MCF 10A (cell line): ENCODE measurements at regions of chr11 and their contacts with region 1.

Region 1: GRCh38 chr11:59753650-59754493 is 1.3 kb upstream of the STX3 start:
- DNase-seq: peak; percentile 83
- H3K4me3 Mint-ChIP-seq: peak overlapping the region; percentile 92
- H3K27ac Mint-ChIP-seq: peak overlapping the region; percentile 51
- H3K4me1 Mint-ChIP-seq: peaks cover 13% of the 10 kb centered on the region
- H3K27me3 Mint-ChIP-seq: no peaks in the 10 kb centered on the region
- CTCF ChIP-seq: peak; percentile 82

Region 2: GRCh38 chr11:59550368-59550841 is 203.5 kb before region 1 on chr11:
- CTCF ChIA-PET with region 1: no interaction called
- POLR2A ChIA-PET with region 1: no interaction called
- intact Hi-C with region 1: loop called (anchors 2 kb)
- DNase-seq: peak; percentile 93
- H3K4me3 Mint-ChIP-seq: peak overlapping the region; percentile 92
- H3K27ac Mint-ChIP-seq: peak overlapping the region; percentile 98
- H3K4me1 Mint-ChIP-seq: peaks cover 21% of the 10 kb centered on the region
- H3K27me3 Mint-ChIP-seq: no peaks in the 10 kb centered on the region
- CTCF ChIP-seq: peak; percentile 40

Region 3: DNA sequence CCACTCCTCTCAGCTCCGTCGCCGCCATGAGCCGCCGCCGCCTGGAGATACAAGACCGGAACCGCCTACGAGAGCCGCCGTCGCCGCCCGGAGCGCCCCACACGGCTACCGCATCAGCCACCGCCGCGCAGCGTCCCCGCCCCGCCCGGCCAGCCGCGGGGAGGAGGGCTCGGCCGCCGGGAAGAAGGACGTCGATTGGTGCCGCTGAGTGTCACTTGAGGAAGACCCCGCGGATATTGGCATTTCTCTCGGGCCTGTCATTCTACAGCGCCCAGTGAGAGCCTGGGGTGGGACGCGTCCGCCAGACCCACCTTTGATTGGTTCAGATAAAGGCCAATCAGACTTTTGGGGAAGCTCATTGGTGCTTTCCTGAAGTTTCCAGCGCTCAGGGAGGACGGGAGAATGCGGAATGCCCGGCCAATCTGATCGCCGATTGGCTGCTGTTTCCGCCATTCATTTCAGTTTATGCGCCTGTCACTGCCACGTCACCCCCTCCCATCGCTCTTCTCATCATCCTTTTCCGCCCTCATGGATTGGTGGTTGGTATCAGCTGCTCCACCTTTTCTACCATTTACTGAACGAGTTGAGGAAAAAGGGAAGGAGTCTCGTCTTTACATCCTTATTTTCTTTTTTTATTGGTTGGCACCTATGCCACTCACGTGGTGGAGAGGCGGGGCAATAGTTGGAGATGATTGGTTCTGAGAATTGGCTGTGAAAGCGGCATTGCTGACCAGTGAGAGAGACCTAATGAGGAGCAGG is 138.1 kb before region 1 on chr11 and contains the start of gene OSBP:
- CTCF ChIA-PET with region 1: interaction called, 3 read pairs
- POLR2A ChIA-PET with region 1: interaction called, 26 read pairs
- intact Hi-C with region 1: no loop called
- DNase-seq: peak; percentile 100
- H3K4me3 Mint-ChIP-seq: peak within 1 kb of the TSS; percentile 77
- H3K27ac Mint-ChIP-seq: peak within 1 kb of the TSS; percentile 89
- H3K4me1 Mint-ChIP-seq: peaks cover 24% of the 10 kb centered on the region
- H3K27me3 Mint-ChIP-seq: no peaks in the 10 kb centered on the region
- CTCF ChIP-seq: no peak
- total RNA-seq, gene OSBP: 73.7 and 76.1 TPM in 2 replicates

Region 4: DNA sequence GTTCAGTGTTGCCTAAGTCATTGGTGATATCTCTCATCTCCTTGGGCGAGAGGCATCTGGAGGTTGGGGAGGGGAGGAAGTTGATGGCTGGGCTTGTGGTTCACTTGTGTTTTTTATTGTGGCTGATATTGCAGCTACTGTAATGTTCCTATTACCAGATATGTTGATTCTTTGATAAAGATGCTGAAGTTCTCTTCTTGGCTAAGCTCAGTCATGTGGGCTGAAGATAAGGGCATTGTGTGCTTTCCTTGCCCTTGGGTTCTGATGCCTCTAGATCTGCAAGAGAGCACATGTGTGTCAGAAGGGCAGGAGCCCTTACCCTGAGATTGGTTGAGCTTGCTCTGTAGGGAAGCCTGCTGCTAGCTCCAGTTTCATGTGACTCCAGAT is 13.3 kb after region 1 on chr11:
- CTCF ChIA-PET with region 1: interaction called, 13 read pairs
- POLR2A ChIA-PET with region 1: interaction called, 64 read pairs
- intact Hi-C with region 1: no loop called
- DNase-seq: no peak
- H3K4me3 Mint-ChIP-seq: no peak overlapping the region
- H3K27ac Mint-ChIP-seq: no peak overlapping the region
- H3K4me1 Mint-ChIP-seq: peaks cover 7% of the 10 kb centered on the region
- H3K27me3 Mint-ChIP-seq: no peaks in the 10 kb centered on the region
- CTCF ChIP-seq: no peak

Region 5: GRCh38 chr11:59787816-59788215 is 33.9 kb after region 1 on chr11:
- CTCF ChIA-PET with region 1: interaction called, 47 read pairs
- POLR2A ChIA-PET with region 1: interaction called, 40 read pairs
- intact Hi-C with region 1: no loop called
- DNase-seq: peak; percentile 37
- H3K4me3 Mint-ChIP-seq: no peak overlapping the region
- H3K27ac Mint-ChIP-seq: no peak overlapping the region
- H3K4me1 Mint-ChIP-seq: peaks cover 14% of the 10 kb centered on the region
- H3K27me3 Mint-ChIP-seq: no peaks in the 10 kb centered on the region
- CTCF ChIP-seq: no peak

Region 6: DNA sequence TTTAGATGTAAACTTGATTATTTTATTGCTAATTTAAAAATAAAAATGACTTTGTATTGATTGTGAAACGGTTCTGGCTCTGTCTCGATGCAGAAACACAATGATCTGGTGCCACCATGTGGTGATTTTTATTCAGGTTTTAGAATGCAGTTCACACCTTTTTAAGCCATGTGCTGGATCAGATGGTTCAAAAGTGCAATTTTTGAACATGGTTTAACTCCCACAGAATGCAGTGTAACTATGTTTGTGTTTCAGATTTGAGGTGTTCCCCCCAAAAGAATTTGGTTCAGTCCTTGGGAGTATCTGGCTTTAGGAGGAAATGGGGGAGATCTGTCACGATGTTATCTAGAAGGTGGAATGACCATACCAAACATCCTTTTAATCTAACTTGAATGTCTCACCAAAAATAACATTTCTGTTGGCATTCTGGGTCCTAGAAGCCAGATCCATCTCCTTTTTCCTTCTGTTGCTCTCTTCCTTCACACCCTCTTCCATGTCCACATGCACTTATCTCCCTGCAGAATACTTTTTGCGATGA is 48.8 kb after region 1 on chr11:
- CTCF ChIA-PET with region 1: interaction called, 160 read pairs
- POLR2A ChIA-PET with region 1: interaction called, 67 read pairs
- intact Hi-C with region 1: loop called (anchors 1 kb)
- DNase-seq: peak; percentile 73
- H3K4me3 Mint-ChIP-seq: no peak overlapping the region
- H3K27ac Mint-ChIP-seq: no peak overlapping the region
- H3K4me1 Mint-ChIP-seq: no peaks in the 10 kb centered on the region
- H3K27me3 Mint-ChIP-seq: no peaks in the 10 kb centered on the region
- CTCF ChIP-seq: peak; percentile 74

Region 7: DNA sequence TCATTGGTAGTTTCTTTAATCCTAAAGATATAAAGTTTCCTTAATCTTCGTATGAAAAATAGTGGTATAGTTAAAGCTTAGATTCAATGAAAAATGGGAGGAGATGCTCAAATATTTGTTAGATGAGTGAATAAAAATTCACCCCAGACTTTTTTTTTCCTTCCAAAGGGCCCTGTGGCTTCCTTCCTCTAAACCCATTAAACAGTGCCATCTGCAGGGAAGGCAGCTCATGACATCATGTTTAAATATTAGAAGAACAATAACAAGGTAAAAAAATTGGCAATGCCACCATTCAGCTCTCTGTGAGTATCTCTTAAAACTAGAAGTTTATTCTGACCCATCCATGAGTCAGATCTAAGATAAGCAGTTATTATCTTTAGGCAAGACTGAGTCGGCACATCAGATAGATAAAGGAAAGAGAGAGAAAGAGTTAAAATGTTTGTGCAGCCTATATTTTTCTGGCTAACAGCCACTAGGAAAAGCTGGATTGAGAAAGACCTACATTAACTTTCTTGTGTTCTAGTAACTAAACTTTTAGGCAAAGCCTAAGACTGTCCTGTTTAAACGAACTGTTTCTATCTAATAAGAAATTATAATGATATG is 165.2 kb after region 1 on chr11:
- CTCF ChIA-PET with region 1: interaction called, 3 read pairs
- POLR2A ChIA-PET with region 1: no interaction called
- intact Hi-C with region 1: loop called (anchors 2 kb)
- DNase-seq: peak; percentile 72
- H3K4me3 Mint-ChIP-seq: no peak overlapping the region
- H3K27ac Mint-ChIP-seq: no peak overlapping the region
- H3K4me1 Mint-ChIP-seq: peaks cover 7% of the 10 kb centered on the region
- H3K27me3 Mint-ChIP-seq: no peaks in the 10 kb centered on the region
- CTCF ChIP-seq: peak; percentile 68